Posterior vena cava (tissue), 2 donors: ENCODE measurements at regions of chr6 and their contacts with region 1.

Region 1: GRCh38 chr6:32118782-32119628 is 9.0 kb downstream of the ATF6B start:
- DNase-seq: peak; percentile 97

Region 2: GRCh38 chr6:30590509-30590908 is 1528.5 kb before region 1 on chr6:
- intact Hi-C with region 1: no loop called
- DNase-seq: peak; percentile 56

Region 3: DNA sequence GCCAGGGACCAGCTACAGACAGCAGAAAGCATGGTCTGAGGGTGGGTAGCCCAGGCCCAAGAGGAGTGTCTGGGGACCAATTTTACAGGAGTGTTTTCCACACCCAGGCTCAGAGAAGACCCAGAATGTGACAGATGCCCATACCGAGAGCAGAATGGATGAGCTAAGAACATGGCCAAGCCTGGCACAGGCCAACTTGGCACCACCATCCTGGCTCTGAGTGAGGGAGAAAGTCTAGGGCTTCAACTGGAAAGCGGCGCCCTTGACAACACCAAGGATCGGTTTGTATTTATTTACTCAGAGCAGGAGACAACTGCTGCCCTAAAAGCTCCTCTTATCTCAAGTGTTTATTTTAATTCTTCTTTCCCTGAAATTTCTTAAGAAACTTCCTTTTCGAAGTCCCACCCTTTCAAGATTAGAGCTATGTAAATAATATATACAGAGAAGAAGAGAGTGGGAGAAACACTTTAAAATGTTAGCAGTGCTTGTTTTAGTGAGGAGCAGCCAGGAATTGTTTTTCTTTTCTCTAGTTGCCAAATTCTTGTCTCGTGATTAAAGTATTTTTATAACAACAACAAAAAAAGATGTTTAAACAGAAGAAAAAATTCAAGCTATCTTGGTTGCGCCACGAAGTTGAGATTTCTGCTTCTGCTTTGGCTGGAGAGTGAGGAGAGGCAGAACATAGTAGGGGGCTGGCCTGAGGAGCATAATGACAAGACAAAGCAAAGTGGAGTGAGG is 26.1 kb before region 1 on chr6:
- intact Hi-C with region 1: loop called in 1 of 2 experiments (anchors 1 kb)
- DNase-seq: peak; percentile 72

Region 4: GRCh38 chr6:32154514-32155161 is 35.6 kb after region 1 on chr6:
- intact Hi-C with region 1: loop called in 1 of 2 experiments (anchors 5 kb)
- DNase-seq: peak; percentile 83

Region 5: DNA sequence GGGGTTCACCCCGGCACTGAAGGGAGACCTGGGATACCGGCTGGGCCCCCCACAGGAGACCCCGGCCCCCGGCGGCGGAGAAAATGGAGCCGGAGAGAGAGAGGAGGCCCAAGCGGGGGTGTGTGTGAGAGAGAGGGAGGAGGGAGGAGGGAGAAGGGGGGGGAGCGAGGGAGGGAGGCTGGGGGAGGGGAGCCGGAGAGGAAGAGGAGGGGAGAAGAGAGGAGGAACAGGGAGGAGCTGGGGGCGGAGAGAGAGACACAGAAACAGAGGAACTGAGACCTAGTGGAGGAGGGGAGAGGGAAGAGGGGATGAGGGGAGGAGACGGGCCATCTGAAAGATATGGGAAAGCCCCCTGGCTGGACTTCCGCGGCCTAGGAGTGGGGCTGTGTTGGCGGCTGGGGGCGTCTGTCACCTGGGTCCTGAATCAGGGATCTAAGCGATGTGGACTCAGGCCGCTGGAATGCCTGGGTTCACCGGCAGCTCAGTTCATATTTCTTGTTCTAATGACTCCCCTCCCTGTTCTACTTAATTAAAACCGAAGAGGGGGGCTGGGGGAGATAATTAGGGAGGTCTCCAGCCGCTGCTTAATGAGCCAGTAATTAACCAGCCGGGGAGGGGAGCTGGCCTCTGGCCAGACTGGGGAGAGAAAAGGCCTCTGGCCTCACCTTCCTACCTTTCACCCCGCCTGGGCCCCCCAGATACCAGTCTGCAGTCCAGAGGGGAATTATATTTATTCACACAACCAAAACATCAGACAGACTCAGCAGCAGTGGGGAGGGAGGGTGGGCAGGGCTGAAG is 71.2 kb after region 1 on chr6 and contains the start of gene PBX2:
- intact Hi-C with region 1: loop called in 1 of 2 experiments (anchors 5 kb)
- DNase-seq: peak; percentile 97
- total RNA-seq, gene PBX2: 49.4 to 53.1 TPM